ENCODE measurements at regions of chr1 and their contacts with region 1.

Region 1: DNA sequence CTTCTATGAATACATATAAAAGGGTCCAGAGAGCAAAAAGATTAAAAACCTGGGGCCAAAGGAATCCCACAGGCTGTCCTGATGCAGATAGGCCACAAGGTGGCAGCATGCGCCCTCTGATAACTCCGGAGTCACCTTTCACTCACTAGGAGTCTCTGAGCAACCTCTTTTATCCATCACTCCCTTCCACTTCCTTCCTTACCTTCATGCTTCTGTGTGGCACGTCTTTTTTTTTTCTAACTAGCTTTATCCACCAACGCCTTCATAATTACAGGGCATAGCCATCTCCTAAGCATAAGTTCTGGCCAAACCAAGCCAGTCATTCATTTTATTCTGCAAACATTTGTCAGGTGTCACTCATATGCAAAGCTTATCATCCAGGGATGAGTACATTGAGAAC is 3.9 kb upstream of the PGLYRP4 start:
- DNase-seq: peak; percentile 78
- CTCF ChIP-seq: peak; percentile 87

Region 2: GRCh38 chr1:153483776-153484175 is 131.3 kb after region 1 on chr1:
- in situ Hi-C with region 1: loop called (anchors 5 kb)
- DNase-seq: no peak
- CTCF ChIP-seq: no peak

Measured in GM13976 (cell line).